B cell (primary cell): ENCODE measurements at regions of chr1 and their contacts with region 1.

Region 1: GRCh38 chr1:117605774-117606648 is at the start of gene TENT5C:
- DNase-seq: peak; percentile 99
- ATAC-seq: peak; percentile 88
- H3K4me3 ChIP-seq: peak within 1 kb of the TSS; percentile 95 to 99 (median 97)
- H3K4me3 Mint-ChIP-seq: peak within 1 kb of the TSS; percentile 99
- H3K27ac ChIP-seq: peak within 1 kb of the TSS; percentile 88 to 96
- H3K27ac Mint-ChIP-seq: peak within 1 kb of the TSS; percentile 96
- H3K4me1 ChIP-seq: peaks cover 38 to 49% of the 10 kb centered on the region in 2 donors
- H3K4me1 Mint-ChIP-seq: peaks cover 52% of the 10 kb centered on the region
- H3K27me3 ChIP-seq: peaks cover 0 to 1% (median 0%) of the 10 kb centered on the region in 4 experiments
- H3K27me3 Mint-ChIP-seq: no peaks in the 10 kb centered on the region
- CTCF ChIP-seq: no peak
- total RNA-seq, gene TENT5C: 112 TPM in 2 replicates

Region 2: GRCh38 chr1:116372587-116373444 is 1233.2 kb before region 1 on chr1 and contains the start of gene ATP1A1:
- CTCF ChIA-PET with region 1: no interaction called
- POLR2A ChIA-PET with region 1: no interaction called
- intact Hi-C with region 1: loop called (anchors 10 kb)
- DNase-seq: peak; percentile 99
- ATAC-seq: peak; percentile 79
- H3K4me3 ChIP-seq: peak within 1 kb of the TSS; percentile 46 to 90 (median 84)
- H3K4me3 Mint-ChIP-seq: peak within 1 kb of the TSS; percentile 96
- H3K27ac ChIP-seq: peak within 1 kb of the TSS; percentile 81 to 91
- H3K27ac Mint-ChIP-seq: peak within 1 kb of the TSS; percentile 96
- H3K4me1 ChIP-seq: peaks cover 39 to 44% of the 10 kb centered on the region in 2 donors
- H3K4me1 Mint-ChIP-seq: peaks cover 37% of the 10 kb centered on the region
- H3K27me3 ChIP-seq: peaks cover 0 to 7% (median 3%) of the 10 kb centered on the region in 4 experiments
- H3K27me3 Mint-ChIP-seq: peaks cover 20% of the 10 kb centered on the region
- CTCF ChIP-seq: no peak
- total RNA-seq, gene ATP1A1: 101 and 107 TPM in 2 replicates

Region 3: DNA sequence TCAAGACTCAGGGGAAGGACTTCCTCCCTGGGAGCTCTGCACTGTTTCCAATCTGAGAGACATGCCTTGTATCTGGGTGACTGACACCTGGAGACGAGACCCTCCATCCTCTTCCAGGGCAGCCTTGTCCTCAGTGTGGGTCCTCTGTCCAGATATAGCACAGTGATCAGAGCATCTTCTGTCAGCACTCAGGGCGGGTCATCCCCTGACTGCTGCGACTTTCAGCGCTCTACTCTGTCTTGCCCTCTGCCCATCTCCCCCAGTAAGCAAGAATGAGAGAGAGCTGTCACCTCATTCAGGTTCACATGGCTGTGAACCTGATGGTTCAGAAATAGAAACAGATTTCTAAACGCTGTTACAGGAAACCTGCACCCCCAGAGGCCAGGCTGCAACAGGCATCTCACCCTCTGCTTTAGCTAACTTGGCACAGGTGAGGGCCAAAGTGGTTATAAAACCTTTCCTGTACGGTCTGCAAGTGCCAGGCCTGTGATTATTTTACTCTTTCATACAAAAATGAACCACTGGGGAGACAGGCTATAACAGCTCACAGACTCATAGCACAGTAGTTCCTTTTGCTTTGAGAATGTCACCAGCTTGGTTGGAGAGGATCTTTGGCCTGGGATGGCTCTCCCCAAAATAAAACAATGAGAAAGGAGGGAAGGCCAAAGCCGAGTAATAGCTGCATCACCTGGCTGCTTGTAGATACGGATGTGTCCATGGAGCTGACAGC is 11.6 kb before region 1 on chr1:
- CTCF ChIA-PET with region 1: interaction called, 4 read pairs
- POLR2A ChIA-PET with region 1: interaction called, 3 read pairs
- intact Hi-C with region 1: loop called (anchors 1 kb)
- DNase-seq: no peak
- ATAC-seq: no peak
- H3K4me3 ChIP-seq: no peak overlapping the region
- H3K4me3 Mint-ChIP-seq: no peak overlapping the region
- H3K27ac ChIP-seq: no peak overlapping the region
- H3K27ac Mint-ChIP-seq: peak overlapping the region; percentile 46
- H3K4me1 ChIP-seq: peaks cover 16 to 26% of the 10 kb centered on the region in 2 donors
- H3K4me1 Mint-ChIP-seq: peaks cover 22% of the 10 kb centered on the region
- H3K27me3 ChIP-seq: no peaks in the 10 kb centered on the region
- H3K27me3 Mint-ChIP-seq: peaks cover 6% of the 10 kb centered on the region
- CTCF ChIP-seq: no peak

Region 4: DNA sequence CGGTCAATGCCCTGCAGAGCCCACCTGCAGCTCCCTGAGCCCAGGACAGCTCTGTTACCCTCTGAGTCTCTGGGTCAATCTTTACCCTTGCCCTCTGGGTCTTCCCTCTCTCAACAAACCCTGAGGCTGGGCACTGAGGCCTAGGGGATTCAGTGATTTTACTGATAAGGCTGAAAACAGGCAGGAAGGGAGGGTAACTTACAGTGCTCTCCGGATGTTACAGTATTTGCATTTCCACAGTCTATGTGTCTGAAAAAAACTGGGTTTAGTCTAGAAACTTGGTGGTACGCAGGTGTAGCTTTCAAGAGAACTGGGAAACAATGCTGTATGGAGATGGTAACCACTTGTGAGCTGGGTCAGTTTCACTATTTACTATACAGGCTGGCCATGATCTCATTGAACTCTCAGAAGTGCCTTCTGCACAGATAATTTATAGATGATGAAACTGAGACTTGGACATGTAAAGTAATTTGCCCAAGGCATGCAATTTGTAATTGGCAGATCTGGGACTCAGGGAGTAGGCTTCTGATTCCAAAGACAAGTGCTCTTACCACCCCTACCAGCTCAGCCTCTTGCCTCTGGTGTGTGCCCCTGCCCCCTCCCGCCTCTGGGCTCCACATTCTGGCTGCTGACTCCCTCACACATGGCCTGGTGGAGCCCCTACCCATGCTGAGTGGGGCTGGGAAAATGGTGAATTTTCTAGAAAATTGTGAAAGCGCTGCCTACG is 48.6 kb after region 1 on chr1:
- CTCF ChIA-PET with region 1: interaction called, 20 read pairs
- POLR2A ChIA-PET with region 1: interaction called, 11 read pairs
- intact Hi-C with region 1: loop called (anchors 2 kb)
- DNase-seq: peak; percentile 83
- ATAC-seq: peak; percentile 67
- H3K4me3 ChIP-seq: peak overlapping the region in 3 of 5 experiments; percentile 12 to 37 (median 28)
- H3K4me3 Mint-ChIP-seq: peak overlapping the region; percentile 75
- H3K27ac ChIP-seq: peak overlapping the region; percentile 93 to 96
- H3K27ac Mint-ChIP-seq: peak overlapping the region; percentile 93
- H3K4me1 ChIP-seq: peaks cover 96% of the 10 kb centered on the region in 2 donors
- H3K4me1 Mint-ChIP-seq: peaks cover 94% of the 10 kb centered on the region
- H3K27me3 ChIP-seq: no peaks in the 10 kb centered on the region
- H3K27me3 Mint-ChIP-seq: no peaks in the 10 kb centered on the region
- CTCF ChIP-seq: no peak

Region 5: GRCh38 chr1:117735045-117735992 is 129.3 kb after region 1 on chr1:
- CTCF ChIA-PET with region 1: no interaction called
- POLR2A ChIA-PET with region 1: no interaction called
- intact Hi-C with region 1: loop called (anchors 5 kb)
- DNase-seq: peak; percentile 61
- ATAC-seq: peak; percentile 57
- H3K4me3 ChIP-seq: peak overlapping the region; percentile 6 to 79 (median 41)
- H3K4me3 Mint-ChIP-seq: peak overlapping the region; percentile 88
- H3K27ac ChIP-seq: peak overlapping the region; percentile 42 to 78
- H3K27ac Mint-ChIP-seq: peak overlapping the region; percentile 91
- H3K4me1 ChIP-seq: peaks cover 12% of the 10 kb centered on the region in 2 donors
- H3K4me1 Mint-ChIP-seq: peaks cover 14% of the 10 kb centered on the region
- H3K27me3 ChIP-seq: no peaks in the 10 kb centered on the region
- H3K27me3 Mint-ChIP-seq: no peaks in the 10 kb centered on the region
- CTCF ChIP-seq: no peak

Region 6: DNA sequence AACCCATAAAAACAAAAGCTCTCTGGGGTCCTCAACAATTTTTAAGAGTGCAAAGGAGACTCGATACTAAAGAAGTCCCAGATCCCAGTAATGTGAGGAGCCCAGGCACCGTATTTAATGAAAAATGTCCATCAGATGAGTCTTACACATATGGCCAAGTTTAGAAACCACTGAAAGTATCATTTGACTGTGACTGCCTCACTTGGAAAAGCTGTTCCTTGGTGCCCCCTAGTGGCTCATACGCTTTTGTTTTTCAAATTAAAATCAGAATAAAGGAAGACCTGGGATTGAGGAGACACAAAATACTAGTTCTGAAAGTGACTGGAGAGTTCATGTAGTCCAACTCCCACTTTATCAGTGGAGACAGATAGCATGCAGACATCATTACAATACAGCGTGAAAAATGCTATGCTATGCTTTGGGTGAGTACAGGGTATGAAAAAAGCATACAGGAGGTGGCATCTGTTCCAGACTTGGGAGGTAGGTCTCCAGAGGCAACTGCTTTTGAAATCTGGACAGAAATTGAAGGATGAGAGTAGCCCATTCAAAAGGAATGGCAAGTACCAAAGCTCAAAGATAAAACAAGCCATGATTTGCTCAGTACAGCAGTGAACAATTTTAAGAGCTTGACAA is 289.6 kb after region 1 on chr1:
- CTCF ChIA-PET with region 1: no interaction called
- POLR2A ChIA-PET with region 1: no interaction called
- intact Hi-C with region 1: no loop called
- DNase-seq: peak; percentile 66
- ATAC-seq: no peak
- H3K4me3 ChIP-seq: no peak overlapping the region
- H3K4me3 Mint-ChIP-seq: no peak overlapping the region
- H3K27ac ChIP-seq: no peak overlapping the region
- H3K27ac Mint-ChIP-seq: no peak overlapping the region
- H3K4me1 ChIP-seq: no peaks in the 10 kb centered on the region
- H3K4me1 Mint-ChIP-seq: peaks cover 2% of the 10 kb centered on the region
- H3K27me3 ChIP-seq: no peaks in the 10 kb centered on the region
- H3K27me3 Mint-ChIP-seq: no peaks in the 10 kb centered on the region
- CTCF ChIP-seq: peak; percentile 97

Region 7: DNA sequence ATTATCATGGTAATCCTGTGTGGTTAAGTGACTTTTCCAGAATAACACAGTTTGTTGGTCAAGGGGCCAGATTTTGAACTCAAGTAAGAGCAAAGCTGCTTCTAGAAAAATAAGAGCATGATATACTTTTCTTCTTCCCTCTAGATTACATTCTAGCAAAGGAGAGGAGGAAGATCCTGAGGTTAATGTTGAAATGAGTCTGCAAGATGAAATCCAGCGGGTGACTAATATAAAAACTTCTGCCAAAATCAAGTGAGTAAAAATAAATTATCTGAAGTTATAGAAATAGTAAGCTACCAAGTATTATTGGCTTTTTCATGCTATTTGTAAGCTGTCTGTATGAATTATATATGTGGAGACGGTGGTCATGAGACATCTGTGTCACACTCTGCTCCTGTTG is 336.3 kb after region 1 on chr1:
- CTCF ChIA-PET with region 1: no interaction called
- POLR2A ChIA-PET with region 1: no interaction called
- intact Hi-C with region 1: no loop called
- DNase-seq: no peak
- ATAC-seq: no peak
- H3K4me3 ChIP-seq: no peak overlapping the region
- H3K4me3 Mint-ChIP-seq: no peak overlapping the region
- H3K27ac ChIP-seq: no peak overlapping the region
- H3K27ac Mint-ChIP-seq: no peak overlapping the region
- H3K4me1 ChIP-seq: no peaks in the 10 kb centered on the region
- H3K4me1 Mint-ChIP-seq: no peaks in the 10 kb centered on the region
- H3K27me3 ChIP-seq: no peaks in the 10 kb centered on the region
- H3K27me3 Mint-ChIP-seq: no peaks in the 10 kb centered on the region
- CTCF ChIP-seq: no peak